ENCODE measurements at regions of chr14 and their contacts with region 1.

Region 1: DNA sequence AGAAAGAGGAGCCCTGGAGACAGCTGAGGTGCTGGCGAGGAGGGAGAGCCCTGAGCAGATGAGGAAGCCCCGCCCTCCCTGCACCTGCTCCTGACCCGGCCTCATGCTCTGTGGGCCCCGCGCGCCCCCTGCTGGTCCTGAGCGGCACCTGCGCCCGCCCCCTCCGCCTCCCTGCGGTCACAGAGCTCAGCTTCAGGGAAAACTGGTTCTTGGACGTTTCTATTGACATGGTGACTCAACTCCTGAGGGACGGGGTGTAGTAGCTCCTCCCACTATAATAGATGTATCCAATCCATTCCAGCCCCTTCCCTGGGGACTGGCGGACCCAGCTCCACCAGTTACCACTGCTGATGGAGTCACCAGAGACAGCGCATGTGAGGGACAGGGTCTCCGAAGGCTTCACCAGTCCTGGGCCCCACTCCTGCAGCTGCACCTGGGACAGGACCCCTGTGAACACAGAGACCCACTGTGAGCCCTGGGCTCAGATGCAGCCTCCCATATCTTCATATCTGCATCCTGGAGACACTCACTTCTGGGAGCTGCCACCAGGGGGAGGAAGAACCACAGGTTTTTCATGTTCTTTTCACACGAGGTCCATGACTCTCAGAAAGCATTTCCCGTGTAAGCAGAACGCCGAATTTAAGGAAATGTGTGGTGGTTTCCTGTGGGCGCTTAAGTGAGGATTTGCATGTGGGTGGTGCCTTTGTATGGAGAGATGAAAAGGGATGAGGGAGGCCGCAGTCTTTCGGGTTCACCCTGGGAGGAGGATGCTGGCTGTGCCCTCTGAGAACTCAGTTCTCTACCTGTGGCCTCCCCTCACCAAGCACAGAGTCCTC is 1346.4 kb downstream of the TMEM121 start:
- DNase-seq: peak; percentile 84
- ATAC-seq: peak; percentile 98
- H3K4me3 ChIP-seq: no peak overlapping the region
- H3K27ac ChIP-seq: no peak overlapping the region
- H3K4me1 ChIP-seq: peaks cover 20% of the 10 kb centered on the region
- H3K27me3 ChIP-seq: no peaks in the 10 kb centered on the region
- CTCF ChIP-seq: peak; percentile 78
- EP300 ChIP-seq: no peak
- POLR2A ChIP-seq: no peak
- RAD21 ChIP-seq: peak; percentile 69

Region 2: DNA sequence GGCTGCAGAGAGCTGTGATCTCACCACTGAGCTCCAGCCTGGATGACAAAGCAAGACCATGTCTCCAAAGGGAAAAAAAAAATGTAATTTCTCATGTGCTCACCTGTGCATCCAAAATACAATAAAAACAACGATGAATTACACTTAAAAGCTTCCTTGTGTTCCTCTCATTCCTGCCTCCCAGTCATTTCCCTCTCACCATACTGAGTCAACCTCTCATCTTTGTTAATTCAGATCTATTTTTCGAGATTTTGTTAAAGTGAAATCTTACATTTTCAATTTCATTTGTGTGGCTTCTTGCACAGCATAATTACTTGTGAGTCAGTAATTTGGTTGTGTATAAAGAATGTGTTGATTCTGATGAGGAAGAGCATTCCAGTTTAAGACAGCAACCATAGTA is 143.3 kb before region 1 on chr14:
- CTCF ChIA-PET with region 1: no interaction called
- POLR2A ChIA-PET with region 1: no interaction called
- in situ Hi-C with region 1: no loop called
- intact Hi-C with region 1: no loop called
- DNase-seq: no peak
- ATAC-seq: no peak
- H3K4me3 ChIP-seq: no peak overlapping the region
- H3K27ac ChIP-seq: no peak overlapping the region
- H3K4me1 ChIP-seq: no peaks in the 10 kb centered on the region
- H3K27me3 ChIP-seq: no peaks in the 10 kb centered on the region
- CTCF ChIP-seq: no peak
- EP300 ChIP-seq: no peak
- POLR2A ChIP-seq: no peak
- RAD21 ChIP-seq: no peak

Region 3: GRCh38 chr14:106802423-106803364 is 70.1 kb before region 1 on chr14:
- CTCF ChIA-PET with region 1: interaction called, 5 read pairs
- POLR2A ChIA-PET with region 1: no interaction called
- in situ Hi-C with region 1: no loop called
- intact Hi-C with region 1: loop called (anchors 2 kb)
- DNase-seq: peak; percentile 40
- ATAC-seq: peak; percentile 98
- H3K4me3 ChIP-seq: peak overlapping the region; percentile 45 to 66 (median 50)
- H3K27ac ChIP-seq: no peak overlapping the region
- H3K4me1 ChIP-seq: peaks cover 8% of the 10 kb centered on the region
- H3K27me3 ChIP-seq: peaks cover 0 to 12% of the 10 kb centered on the region in 2 experiments; a peak in 1 of 5 replicates
- CTCF ChIP-seq: peak; percentile 77
- EP300 ChIP-seq: no peak
- POLR2A ChIP-seq: no peak
- RAD21 ChIP-seq: no peak

Region 4: DNA sequence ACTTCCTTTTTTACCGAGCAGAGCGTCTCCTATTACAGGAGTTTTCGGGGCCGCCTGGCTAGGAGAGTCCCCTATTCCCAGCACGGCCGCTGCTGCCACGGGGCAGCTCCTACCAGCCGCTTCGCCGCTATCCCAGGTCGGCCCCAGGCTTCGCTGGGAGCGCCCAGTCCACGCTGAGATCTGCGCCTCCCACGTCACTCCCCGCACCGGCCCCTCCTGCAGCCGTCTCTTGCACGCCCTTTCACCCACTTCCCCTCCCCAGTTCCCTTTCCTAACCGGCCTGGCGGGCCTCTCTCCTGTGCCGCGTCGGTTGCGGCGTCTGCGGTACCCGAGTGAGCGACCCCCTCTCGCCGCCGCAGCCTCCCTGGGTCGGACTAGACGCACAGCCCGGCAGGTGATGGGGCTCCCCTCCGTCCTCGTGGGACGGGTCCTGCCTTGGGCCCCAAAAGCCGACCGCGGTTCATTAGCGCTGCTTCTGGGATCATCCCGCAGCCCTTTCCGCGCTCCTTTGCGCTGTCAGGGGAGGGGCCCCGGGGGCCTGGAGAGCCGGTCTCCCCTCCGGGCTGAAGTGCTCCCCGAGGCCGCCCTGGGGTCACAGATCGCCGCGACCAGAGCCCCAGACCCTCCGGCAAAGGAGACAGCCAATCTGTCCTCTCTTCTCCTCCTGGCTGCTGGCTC is 28.1 kb before region 1 on chr14:
- CTCF ChIA-PET with region 1: interaction called, 21 read pairs
- POLR2A ChIA-PET with region 1: interaction called, 18 read pairs
- in situ Hi-C with region 1: no loop called
- intact Hi-C with region 1: loop called (anchors 1 kb)
- DNase-seq: peak; percentile 44
- ATAC-seq: peak; percentile 68
- H3K4me3 ChIP-seq: peak overlapping the region; percentile 76 to 88 (median 80)
- H3K27ac ChIP-seq: peak overlapping the region; percentile 95
- H3K4me1 ChIP-seq: peaks cover 59% of the 10 kb centered on the region
- H3K27me3 ChIP-seq: no peaks in the 10 kb centered on the region
- CTCF ChIP-seq: no peak
- EP300 ChIP-seq: no peak
- POLR2A ChIP-seq: peak; percentile 54 to 79; a peak in 3 of 4 replicates
- RAD21 ChIP-seq: no peak

Measured in HepG2 (cell line).